ENCODE measurements at regions of chr11 and their contacts with region 1.

Region 1: GRCh38 chr11:75445315-75445953 is 12.4 kb upstream of the KLHL35 start:
- DNase-seq: peak; percentile 69 to 77
- H3K4me3 ChIP-seq: no peak overlapping the region
- H3K27ac ChIP-seq: no peak overlapping the region
- H3K4me1 ChIP-seq: no peaks in the 10 kb centered on the region
- H3K27me3 ChIP-seq: no peaks in the 10 kb centered on the region
- CTCF ChIP-seq: peak; percentile 93 to 98

Region 2: DNA sequence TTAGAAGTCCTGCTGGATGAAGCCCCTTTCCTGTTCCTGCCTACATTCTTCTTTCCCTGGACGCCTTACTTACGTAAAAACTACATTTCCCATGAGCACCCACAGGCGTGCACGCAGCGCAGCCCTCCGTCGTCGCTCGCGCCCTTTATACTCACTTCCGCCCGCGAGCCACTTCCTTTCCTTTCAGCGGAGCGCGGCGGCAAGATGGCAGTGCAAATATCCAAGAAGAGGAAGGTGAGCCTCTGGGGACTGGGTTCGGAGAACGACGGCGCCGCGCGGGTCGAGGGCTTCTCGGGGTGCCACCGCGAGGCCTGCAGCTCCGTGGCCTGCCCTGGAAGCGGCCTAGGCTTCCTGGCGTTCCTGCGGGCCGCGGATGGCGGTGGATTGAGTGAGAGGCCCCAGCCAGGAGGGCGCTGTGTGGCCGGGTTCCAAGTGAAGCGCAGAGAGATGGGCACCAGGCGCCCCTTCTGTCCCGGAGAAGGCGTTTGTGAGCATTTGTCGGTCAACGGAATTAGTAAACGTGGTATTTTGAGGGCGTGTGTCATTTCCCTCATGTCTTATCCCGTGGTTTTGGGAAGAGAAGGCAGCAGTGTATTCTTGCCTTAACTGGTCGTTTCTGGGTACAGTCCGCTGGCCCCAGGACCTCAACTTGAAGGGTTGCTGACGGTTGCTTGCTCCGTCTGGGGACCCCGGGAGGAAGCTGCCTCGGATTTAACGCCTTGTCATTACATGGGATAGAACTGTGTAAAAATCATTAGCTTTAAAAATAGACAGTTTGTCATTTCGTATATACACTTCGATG is 45.9 kb before region 1 on chr11 and contains the start of gene RPS3:
- intact Hi-C with region 1: loop called (anchors 10 kb)
- DNase-seq: peak; percentile 94 to 95
- H3K4me3 ChIP-seq: peak within 1 kb of the TSS; percentile 60 to 70
- H3K27ac ChIP-seq: peak within 1 kb of the TSS; percentile 87 to 88
- H3K4me1 ChIP-seq: peaks cover 0 to 29% (median 18%) of the 10 kb centered on the region in 4 donors
- H3K27me3 ChIP-seq: no peaks in the 10 kb centered on the region
- CTCF ChIP-seq: peak in 1 of 2 experiments; percentile 25

Region 3: GRCh38 chr11:75531325-75531724 is 85.9 kb after region 1 on chr11:
- intact Hi-C with region 1: loop called (anchors 2 kb)
- DNase-seq: no peak
- H3K4me3 ChIP-seq: no peak overlapping the region
- H3K27ac ChIP-seq: no peak overlapping the region
- H3K4me1 ChIP-seq: peaks cover 0 to 6% (median 1%) of the 10 kb centered on the region in 4 donors
- H3K27me3 ChIP-seq: no peaks in the 10 kb centered on the region
- CTCF ChIP-seq: no peak

Measured in tibial artery (tissue), 4 donors.